ENCODE measurements at regions of chr2 and their contacts with region 1.

Region 1: DNA sequence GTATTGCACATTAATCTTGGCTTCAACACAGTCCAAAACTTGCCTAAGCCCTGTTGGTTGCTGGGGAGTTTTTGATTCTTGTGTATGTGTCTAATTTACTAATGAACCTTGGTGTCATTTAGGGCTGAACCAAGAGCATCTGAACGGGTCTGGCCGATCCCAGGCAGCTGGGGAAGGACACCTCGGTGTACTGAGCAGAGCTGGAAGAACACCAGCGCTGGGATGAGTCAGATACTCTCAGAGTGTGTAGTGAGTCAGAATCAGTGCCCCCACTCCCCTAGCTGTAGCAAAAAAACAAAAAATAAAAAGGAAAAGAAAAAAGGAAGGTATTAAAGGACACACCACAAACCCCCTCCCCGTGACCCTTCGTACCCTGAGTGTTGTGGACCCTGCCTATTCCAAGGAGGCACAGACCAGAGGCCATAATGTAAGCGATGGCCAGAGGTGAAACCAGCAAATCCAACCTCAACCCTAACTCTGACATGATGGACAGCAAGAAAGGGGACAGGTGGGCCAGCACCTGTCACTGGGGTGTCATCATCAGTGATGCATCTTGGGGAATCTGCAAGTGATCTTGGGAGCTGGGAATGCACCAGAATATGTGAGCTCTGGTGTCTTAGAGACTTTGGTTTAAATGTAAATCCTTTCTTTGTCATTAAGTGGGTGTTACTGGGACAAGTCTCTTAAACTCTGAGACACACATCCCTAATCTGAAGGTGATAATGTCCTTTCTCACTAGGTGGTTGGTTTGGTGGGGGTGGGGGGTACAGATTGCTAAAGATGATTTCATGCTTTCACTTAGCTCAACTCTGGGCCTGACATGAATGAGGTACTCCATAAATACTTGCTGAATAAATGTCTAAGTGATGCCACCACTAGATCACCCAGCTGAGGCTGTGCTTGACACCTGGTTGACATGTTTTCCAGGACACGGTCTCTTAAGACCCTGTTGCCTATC is 34.2 kb upstream of the NCOA1 start:
- DNase-seq: peak; percentile 86 to 92
- ATAC-seq: peak; percentile 96 to 98 (median 98)
- H3K4me3 ChIP-seq: no peak overlapping the region
- H3K27ac ChIP-seq: peak overlapping the region; percentile 84
- H3K4me1 ChIP-seq: peaks cover 34% of the 10 kb centered on the region
- H3K27me3 ChIP-seq: no peaks in the 10 kb centered on the region
- CTCF ChIP-seq: no peak

Region 2: GRCh38 chr2:24409700-24410556 is 47.0 kb before region 1 on chr2:
- intact Hi-C with region 1: loop called in 1 of 2 experiments (anchors 2 kb)
- DNase-seq: no peak
- ATAC-seq: peak; percentile 84 to 95 (median 89)
- H3K4me3 ChIP-seq: peak overlapping the region; percentile 23
- H3K27ac ChIP-seq: no peak overlapping the region
- H3K4me1 ChIP-seq: peaks cover 14% of the 10 kb centered on the region
- H3K27me3 ChIP-seq: no peaks in the 10 kb centered on the region
- CTCF ChIP-seq: peak; percentile 87

Region 3: GRCh38 chr2:24421668-24422067 is 35.2 kb before region 1 on chr2:
- intact Hi-C with region 1: loop called (anchors 5 kb)
- DNase-seq: peak; percentile 63 to 66
- ATAC-seq: peak; percentile 66 to 95 (median 88)
- H3K4me3 ChIP-seq: no peak overlapping the region
- H3K27ac ChIP-seq: no peak overlapping the region
- H3K4me1 ChIP-seq: no peaks in the 10 kb centered on the region
- H3K27me3 ChIP-seq: no peaks in the 10 kb centered on the region
- CTCF ChIP-seq: peak; percentile 54

Region 4: DNA sequence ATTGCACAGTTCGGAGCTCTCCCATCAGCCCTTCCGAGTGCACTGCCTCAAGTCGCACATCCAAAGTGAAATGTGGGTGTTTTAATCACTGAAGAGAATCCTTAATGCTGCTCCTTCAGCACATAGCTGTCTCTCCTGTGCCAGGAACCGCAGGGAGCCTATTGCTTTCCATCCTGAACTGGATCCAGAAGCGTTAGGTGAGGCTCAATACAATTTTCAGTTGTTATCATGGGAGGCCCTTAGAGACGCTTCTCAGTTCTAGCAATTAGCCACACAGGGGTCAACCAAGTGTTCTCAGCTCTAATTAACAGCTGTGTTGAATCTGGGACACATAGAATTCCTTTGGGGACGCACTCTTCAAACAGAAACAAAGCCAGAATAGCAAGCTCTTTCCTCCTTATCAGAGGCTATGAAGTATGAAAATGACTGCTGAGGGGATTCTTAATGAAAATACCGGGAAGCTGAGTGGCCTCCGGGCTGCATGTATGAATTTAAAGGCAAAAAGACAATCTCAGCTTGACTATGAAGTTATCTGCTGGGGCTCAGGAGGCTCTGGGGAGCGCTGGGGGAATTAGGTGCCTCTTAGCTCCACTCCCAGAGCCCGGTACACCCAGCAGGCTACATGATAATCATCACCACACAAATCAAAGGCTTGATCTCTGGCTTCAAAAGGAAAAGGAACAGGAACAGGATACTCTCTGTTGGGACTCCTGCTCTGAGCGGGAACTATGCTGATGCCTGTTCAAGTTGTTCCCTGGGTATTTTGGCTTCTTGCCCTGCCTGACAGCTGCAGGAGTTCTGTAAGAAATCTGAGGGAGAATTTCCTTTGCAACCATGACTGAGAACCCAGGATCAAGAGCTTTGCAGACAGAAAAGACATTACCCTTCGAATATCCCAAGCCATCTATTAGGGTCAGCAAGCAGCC is 21.2 kb before region 1 on chr2:
- intact Hi-C with region 1: loop called in 1 of 2 experiments (anchors 2 kb)
- DNase-seq: peak; percentile 78 to 86
- ATAC-seq: peak; percentile 85 to 92 (median 91)
- H3K4me3 ChIP-seq: peak overlapping the region; percentile 40
- H3K27ac ChIP-seq: peak overlapping the region; percentile 87
- H3K4me1 ChIP-seq: peaks cover 60% of the 10 kb centered on the region
- H3K27me3 ChIP-seq: no peaks in the 10 kb centered on the region
- CTCF ChIP-seq: no peak

Region 5: GRCh38 chr2:24568551-24568950 is 111.7 kb after region 1 on chr2:
- intact Hi-C with region 1: no loop called
- DNase-seq: no peak
- ATAC-seq: no peak
- H3K4me3 ChIP-seq: no peak overlapping the region
- H3K27ac ChIP-seq: no peak overlapping the region
- H3K4me1 ChIP-seq: no peaks in the 10 kb centered on the region
- H3K27me3 ChIP-seq: no peaks in the 10 kb centered on the region
- CTCF ChIP-seq: no peak

Region 6: GRCh38 chr2:24886691-24887304 is 429.9 kb after region 1 on chr2:
- intact Hi-C with region 1: no loop called
- DNase-seq: no peak
- ATAC-seq: no peak
- H3K4me3 ChIP-seq: no peak overlapping the region
- H3K27ac ChIP-seq: peak overlapping the region; percentile 41
- H3K4me1 ChIP-seq: peaks cover 3% of the 10 kb centered on the region
- H3K27me3 ChIP-seq: no peaks in the 10 kb centered on the region
- CTCF ChIP-seq: no peak